Motor neuron (in vitro differentiated cells): ENCODE measurements at regions of chr4 and their contacts with region 1.

Region 1: GRCh38 chr4:105708530-105709391 is at the starts of genes GSTCD and INTS12:
- ATAC-seq: peak; percentile 91 to 97 (median 95)
- H3K4me3 ChIP-seq: peak within 1 kb of the TSS; percentile 70 to 88 (median 76)
- H3K27ac ChIP-seq: peak within 1 kb of the TSS; percentile 84 to 88
- H3K4me1 ChIP-seq: peaks cover 5 to 20% of the 10 kb centered on the region in 2 donors
- total RNA-seq, gene GSTCD: 4.6 to 37.7 (median 10.4) TPM
- total RNA-seq, gene INTS12: 19.6 to 31.9 (median 25.4) TPM

Region 2: GRCh38 chr4:105520817-105521790 is 187.7 kb before region 1 on chr4:
- in situ Hi-C with region 1: loop called in 1 of 9 experiments (anchors 25 kb)
- ATAC-seq: peak in 7 of 8 experiments; percentile 44 to 92 (median 71)
- H3K4me3 ChIP-seq: no peak overlapping the region
- H3K27ac ChIP-seq: no peak overlapping the region
- H3K4me1 ChIP-seq: no peaks in the 10 kb centered on the region

Region 3: DNA sequence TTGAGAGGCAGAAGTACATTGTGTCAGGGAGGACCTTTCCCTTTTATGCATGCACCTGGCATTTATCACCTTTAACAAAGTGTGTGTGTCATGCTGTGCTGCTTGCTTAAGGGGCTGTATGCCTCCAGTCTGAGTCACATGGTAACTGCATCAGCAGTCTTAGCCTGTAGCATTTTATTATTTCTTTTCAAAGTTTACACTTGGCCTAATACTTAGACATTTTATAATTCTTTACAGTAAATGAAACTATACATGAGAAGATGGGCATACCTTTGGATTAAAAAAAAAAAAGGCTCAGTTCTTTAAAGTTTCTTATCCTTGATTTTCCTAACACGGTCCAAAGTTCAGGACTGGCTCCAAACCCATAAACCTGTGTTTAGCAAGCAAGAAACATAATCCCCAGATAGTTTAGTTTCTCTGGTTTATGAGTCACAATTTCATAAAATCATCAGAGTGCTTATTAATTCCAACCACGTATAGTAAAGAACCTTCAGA is 201.1 kb after region 1 on chr4:
- in situ Hi-C with region 1: no loop called
- ATAC-seq: peak in 1 of 8 experiments; percentile 45
- H3K4me3 ChIP-seq: no peak overlapping the region
- H3K27ac ChIP-seq: no peak overlapping the region
- H3K4me1 ChIP-seq: no peaks in the 10 kb centered on the region

Region 4: DNA sequence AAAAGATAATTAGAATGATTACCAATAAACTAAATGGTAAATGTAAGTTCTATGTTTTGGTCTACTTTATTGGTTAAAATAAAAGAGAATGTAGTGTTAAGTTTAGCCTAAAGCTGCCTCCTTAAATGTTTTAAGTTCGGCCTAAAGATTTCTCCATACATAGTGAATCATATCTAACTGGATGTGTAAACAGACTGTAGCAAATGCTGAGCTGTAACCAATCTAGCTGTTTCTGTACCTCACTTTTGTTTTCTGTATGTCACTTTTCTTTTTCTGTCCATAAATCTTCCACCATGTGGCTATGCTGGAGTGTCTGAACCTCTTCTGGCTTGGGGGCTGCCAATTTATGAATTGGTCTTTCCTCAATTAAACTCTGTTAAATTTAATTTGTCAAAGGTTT is 486.0 kb after region 1 on chr4:
- in situ Hi-C with region 1: loop called in 1 of 9 experiments (anchors 25 kb)
- ATAC-seq: no peak
- H3K4me3 ChIP-seq: no peak overlapping the region
- H3K27ac ChIP-seq: no peak overlapping the region
- H3K4me1 ChIP-seq: no peaks in the 10 kb centered on the region

Region 5: DNA sequence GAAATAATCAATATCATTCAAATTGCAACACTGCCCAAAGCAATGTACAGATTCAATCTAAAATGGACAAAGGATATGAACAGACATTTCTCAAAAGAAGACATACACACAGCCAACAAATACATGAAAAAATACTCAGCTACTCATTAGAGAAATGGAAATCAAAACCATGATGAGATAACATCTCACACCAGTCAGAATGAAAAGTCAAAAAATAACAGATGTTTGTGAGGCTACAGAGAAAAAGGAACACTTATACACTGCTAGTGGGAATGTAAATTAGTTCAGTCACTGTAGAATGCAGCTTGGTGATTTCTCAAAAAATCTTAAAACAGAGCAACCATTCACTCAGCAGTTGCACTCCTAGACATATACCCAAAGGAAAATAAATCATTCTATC is 1122.1 kb after region 1 on chr4:
- in situ Hi-C with region 1: no loop called
- ATAC-seq: peak in 2 of 8 experiments; percentile 31 to 35
- H3K4me3 ChIP-seq: no peak overlapping the region
- H3K27ac ChIP-seq: no peak overlapping the region
- H3K4me1 ChIP-seq: no peaks in the 10 kb centered on the region